ENCODE measurements at regions of chr20 and their contacts with region 1.

Region 1: GRCh38 chr20:45798935-45799642 is 7.3 kb downstream of the DNTTIP1 start:
- DNase-seq: no peak

Region 2: DNA sequence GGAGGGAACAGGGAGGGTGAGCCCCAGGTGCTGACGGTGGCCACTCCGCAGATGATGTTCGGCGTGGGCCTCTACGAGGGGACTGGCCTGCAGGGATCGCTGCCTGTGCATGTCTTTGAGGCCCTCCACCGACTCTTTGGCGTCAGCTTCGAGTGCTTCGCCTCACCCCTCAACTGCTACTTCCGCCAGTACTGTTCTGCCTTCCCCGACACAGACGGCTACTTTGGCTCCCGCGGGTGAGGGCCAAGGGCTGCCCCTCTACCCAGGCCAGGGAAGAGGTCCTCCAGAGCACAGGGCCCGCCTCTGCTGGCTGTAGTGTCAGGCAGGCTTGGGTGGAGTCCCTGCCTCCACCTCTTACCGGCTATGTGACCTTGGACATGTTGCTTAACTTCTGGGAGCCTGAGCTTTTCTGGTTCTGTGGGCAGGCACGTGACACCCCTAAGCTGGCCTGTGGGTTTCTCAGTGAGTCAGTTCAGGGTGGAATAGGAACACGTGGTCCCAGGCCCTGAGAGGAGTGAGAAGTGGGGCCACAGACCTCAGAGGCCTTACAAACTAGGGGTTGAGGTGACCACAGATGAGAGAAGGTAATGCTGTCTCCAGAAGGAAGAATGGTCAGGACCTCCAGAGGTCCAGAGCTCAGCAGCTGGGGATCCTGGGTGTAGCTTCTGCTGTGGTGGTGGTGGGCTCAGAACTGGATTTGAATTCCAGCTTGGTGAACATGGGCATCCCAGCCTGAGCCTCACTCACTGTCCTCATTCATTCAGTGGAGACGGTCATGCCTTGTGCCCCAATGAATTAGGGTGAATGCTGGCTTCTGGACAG is 147.3 kb after region 1 on chr20:
- intact Hi-C with region 1: loop called in 1 of 2 experiments (anchors 10 kb)
- DNase-seq: peak; percentile 88

Region 3: GRCh38 chr20:46004889-46005473 is 205.9 kb after region 1 on chr20:
- intact Hi-C with region 1: no loop called
- DNase-seq: no peak

Region 4: GRCh38 chr20:46363800-46364634 is 564.9 kb after region 1 on chr20:
- intact Hi-C with region 1: loop called in 1 of 2 experiments (anchors 10 kb)
- DNase-seq: peak; percentile 96

Measured in posterior vena cava (tissue), 2 donors.